ENCODE measurements at regions of chr2 and their contacts with region 1.

Region 1: GRCh38 chr2:149017116-149017985 is 21.1 kb upstream of the LYPD6B start:
- DNase-seq: peak; percentile 69 to 94 (median 86)

Region 2: DNA sequence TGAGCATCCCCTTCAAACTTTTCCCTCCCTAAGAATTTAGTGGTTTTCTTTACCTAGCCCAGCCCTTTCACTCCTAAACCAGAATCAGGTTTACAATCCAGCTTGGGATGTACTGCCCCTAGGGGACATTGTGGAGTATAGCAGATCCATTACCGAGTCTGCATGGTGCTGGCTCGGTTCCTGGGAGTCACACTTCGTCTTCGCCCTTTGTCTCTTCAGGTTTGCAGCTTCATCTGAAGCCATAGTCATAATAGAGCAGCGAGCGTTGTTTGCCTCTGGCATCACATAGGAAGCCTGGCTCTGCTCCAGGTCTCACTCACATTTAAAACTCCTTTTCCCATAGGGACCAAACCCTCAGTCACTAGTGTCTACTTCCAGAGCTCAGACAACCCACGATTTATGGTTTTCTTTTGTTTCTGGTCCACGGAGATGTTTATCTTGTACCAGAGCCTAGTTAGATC is 296.2 kb after region 1 on chr2:
- intact Hi-C with region 1: loop called (anchors 10 kb)
- DNase-seq: peak in 28 of 42 donors; percentile 11 to 70 (median 28)

Region 3: DNA sequence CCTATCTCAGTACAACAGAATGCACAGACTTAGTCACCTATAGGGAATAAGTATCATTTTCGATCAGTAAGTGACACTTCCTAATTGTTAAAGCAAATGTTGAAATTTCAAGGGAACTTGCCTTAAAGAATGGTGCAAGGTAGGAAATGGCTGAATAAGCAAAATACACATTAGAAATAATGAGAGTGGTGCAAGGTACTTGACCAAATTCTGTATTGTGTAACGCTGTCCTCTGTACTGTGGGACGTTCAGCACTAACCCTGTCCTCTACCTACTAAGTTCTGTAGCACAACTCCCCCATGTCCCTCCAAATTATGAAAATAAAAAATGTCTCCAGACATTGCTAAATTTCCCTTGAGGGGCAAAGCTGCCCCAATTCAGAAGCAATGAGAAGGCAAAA is 550.8 kb after region 1 on chr2:
- intact Hi-C with region 1: loop called (anchors 5 kb)
- DNase-seq: no peak

Measured in head of caudate nucleus (tissue), 42 donors.